Posterior vena cava (tissue), 2 donors: ENCODE measurements at regions of chr10 and their contacts with region 1.

Region 1: GRCh38 chr10:80090121-80090520 is 11.7 kb downstream of the TMEM254 start:
- DNase-seq: no peak

Region 2: DNA sequence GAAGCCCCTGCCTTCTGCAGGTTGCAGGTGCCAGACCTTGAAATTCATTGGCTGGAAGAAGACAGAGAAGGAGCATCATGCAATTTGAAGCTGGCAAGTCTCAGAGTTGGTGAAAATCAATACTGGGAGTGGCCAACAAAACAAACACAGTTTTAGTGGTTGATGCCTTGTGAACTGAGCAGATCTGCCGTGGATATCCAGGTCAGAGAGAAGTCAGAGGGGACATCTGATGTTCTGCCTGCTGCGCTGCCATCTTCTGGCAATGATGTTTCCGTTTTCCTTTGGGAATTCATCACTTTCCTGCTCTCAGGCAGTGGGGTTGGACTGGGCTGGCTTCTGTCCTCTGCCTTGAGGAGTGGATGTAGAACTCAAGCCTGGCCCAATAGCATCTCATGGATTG is 1924.5 kb before region 1 on chr10:
- intact Hi-C with region 1: loop called in 1 of 2 experiments (anchors 10 kb)
- DNase-seq: no peak